CD4-positive, alpha-beta T cell (primary cell): ENCODE measurements at regions of chr2 and their contacts with region 1.

Region 1: GRCh38 chr2:31523871-31524492 is 56.8 kb downstream of the SRD5A2 start:
- DNase-seq: peak; percentile 3 to 58 (median 32)
- ATAC-seq: no peak
- H3K4me3 ChIP-seq: no peak overlapping the region
- H3K4me3 Mint-ChIP-seq: no peak overlapping the region
- H3K27ac ChIP-seq: no peak overlapping the region
- H3K27ac Mint-ChIP-seq: no peak overlapping the region
- H3K4me1 ChIP-seq: no peaks in the 10 kb centered on the region
- H3K4me1 Mint-ChIP-seq: no peaks in the 10 kb centered on the region
- H3K27me3 ChIP-seq: peaks cover 0 to 9% of the 10 kb centered on the region in 2 experiments
- H3K27me3 Mint-ChIP-seq: peaks cover 28% of the 10 kb centered on the region
- CTCF ChIP-seq: peak; percentile 88

Region 2: GRCh38 chr2:31413862-31414550 is 110.0 kb before region 1 on chr2:
- CTCF ChIA-PET with region 1: interaction called, 3 read pairs
- POLR2A ChIA-PET with region 1: no interaction called
- intact Hi-C with region 1: loop called in 1 of 2 experiments (anchors 5 kb)
- DNase-seq: peak in 3 of 14 experiments; percentile 20 to 26 (median 23)
- ATAC-seq: no peak
- H3K4me3 ChIP-seq: no peak overlapping the region
- H3K4me3 Mint-ChIP-seq: no peak overlapping the region
- H3K27ac ChIP-seq: no peak overlapping the region
- H3K27ac Mint-ChIP-seq: no peak overlapping the region
- H3K4me1 ChIP-seq: peaks cover 12% of the 10 kb centered on the region
- H3K4me1 Mint-ChIP-seq: peaks cover 23% of the 10 kb centered on the region
- H3K27me3 ChIP-seq: no peaks in the 10 kb centered on the region
- H3K27me3 Mint-ChIP-seq: peaks cover 9% of the 10 kb centered on the region
- CTCF ChIP-seq: no peak